Activated T-helper 2 cell treated with anti-CD3 and anti-CD28 coated beads, Interferon-gamma antibody, Interleukin-2, Interleukin-4, amounts not matched to agents 10 μg/mL and 5 μg/mL and 100 μg/mL, durations not matched to agents 14 hours and 24 hours and 36 hours (primary cell): ENCODE measurements at regions of chr3 and their contacts with region 1.

Region 1: GRCh38 chr3:37993820-37994638 is 3.4 kb downstream of the VILL start:
- DNase-seq: peak; percentile 54
- H3K4me3 Mint-ChIP-seq: peak overlapping the region; percentile 83
- H3K27ac Mint-ChIP-seq: peak overlapping the region; percentile 87
- H3K4me1 Mint-ChIP-seq: peaks cover 43% of the 10 kb centered on the region
- H3K27me3 Mint-ChIP-seq: no peaks in the 10 kb centered on the region

Region 2: GRCh38 chr3:37824954-37825328 is 169.1 kb before region 1 on chr3:
- intact Hi-C with region 1: no loop called
- DNase-seq: no peak
- H3K4me3 Mint-ChIP-seq: no peak overlapping the region
- H3K27ac Mint-ChIP-seq: no peak overlapping the region
- H3K4me1 Mint-ChIP-seq: no peaks in the 10 kb centered on the region
- H3K27me3 Mint-ChIP-seq: peaks cover 25% of the 10 kb centered on the region

Region 3: GRCh38 chr3:38039101-38039898 is 45.3 kb after region 1 on chr3 and contains the start of gene DLEC1:
- intact Hi-C with region 1: loop called (anchors 1 kb)
- DNase-seq: peak; percentile 86
- H3K4me3 Mint-ChIP-seq: peak within 1 kb of the TSS; percentile 66
- H3K27ac Mint-ChIP-seq: peak within 1 kb of the TSS; percentile 95
- H3K4me1 Mint-ChIP-seq: peaks cover 32% of the 10 kb centered on the region
- H3K27me3 Mint-ChIP-seq: peaks cover 7% of the 10 kb centered on the region
- total RNA-seq, gene DLEC1: 0.02 and 0.16 TPM in 2 replicates